PC-3 (cell line): ENCODE measurements at regions of chr2 and their contacts with region 1.

Region 1: GRCh38 chr2:199940373-199940772 is 14.9 kb downstream of the TYW5 start:
- DNase-seq: peak; percentile 43
- ATAC-seq: peak; percentile 50
- H3K4me3 ChIP-seq: no peak overlapping the region
- H3K27ac ChIP-seq: no peak overlapping the region
- H3K4me1 ChIP-seq: no peaks in the 10 kb centered on the region
- H3K27me3 ChIP-seq: no peaks in the 10 kb centered on the region
- CTCF ChIP-seq: peak; percentile 62

Region 2: GRCh38 chr2:199704358-199705238 is 235.8 kb before region 1 on chr2:
- CTCF ChIA-PET with region 1: no interaction called
- POLR2A ChIA-PET with region 1: no interaction called
- intact Hi-C with region 1: loop called (anchors 1 kb)
- DNase-seq: peak; percentile 74
- ATAC-seq: peak; percentile 82
- H3K4me3 ChIP-seq: no peak overlapping the region
- H3K27ac ChIP-seq: no peak overlapping the region
- H3K4me1 ChIP-seq: no peaks in the 10 kb centered on the region
- H3K27me3 ChIP-seq: no peaks in the 10 kb centered on the region; the same call in 1 of the 2 replicates
- CTCF ChIP-seq: peak; percentile 90

Region 3: GRCh38 chr2:199744724-199745123 is 195.6 kb before region 1 on chr2:
- CTCF ChIA-PET with region 1: no interaction called
- POLR2A ChIA-PET with region 1: no interaction called
- intact Hi-C with region 1: no loop called
- DNase-seq: no peak
- ATAC-seq: no peak
- H3K4me3 ChIP-seq: no peak overlapping the region
- H3K27ac ChIP-seq: no peak overlapping the region
- H3K4me1 ChIP-seq: peaks cover under 1% of the 10 kb centered on the region
- H3K27me3 ChIP-seq: peaks cover 69% of the 10 kb centered on the region
- CTCF ChIP-seq: no peak

Region 4: DNA sequence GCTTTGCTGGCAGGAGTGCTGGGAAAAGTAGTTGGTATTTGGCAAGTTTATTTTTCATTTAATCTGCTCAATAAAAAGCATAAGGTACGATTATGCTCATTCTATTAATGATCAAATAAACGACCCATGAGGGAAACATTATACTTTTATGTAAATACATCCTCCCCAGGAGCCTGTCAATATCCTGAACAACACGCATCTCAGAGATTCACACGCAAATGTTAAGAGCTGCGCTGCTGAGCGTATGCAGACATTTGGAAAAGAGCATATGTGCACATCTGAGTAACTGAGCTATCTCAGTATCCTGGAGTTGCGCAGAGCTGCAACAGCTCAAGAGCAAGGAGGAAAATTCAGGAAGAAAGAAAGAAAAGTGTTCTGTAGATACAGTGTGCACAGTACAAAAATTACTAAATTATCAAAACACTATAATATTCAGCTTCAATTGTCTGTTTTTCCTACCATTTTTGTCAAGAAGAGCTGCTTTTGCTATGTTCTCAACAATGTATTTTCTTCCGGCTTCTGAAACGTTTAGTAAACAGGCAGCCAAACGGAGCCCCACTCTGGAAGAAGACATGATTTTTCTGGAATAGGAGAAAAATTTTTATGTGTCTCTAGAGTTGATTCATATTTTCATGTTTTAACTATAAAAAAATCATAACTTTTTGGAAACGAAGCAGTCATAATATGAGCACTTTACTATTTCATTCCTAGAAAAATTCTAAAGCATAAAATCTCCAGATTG is 91.8 kb before region 1 on chr2:
- CTCF ChIA-PET with region 1: no interaction called
- POLR2A ChIA-PET with region 1: no interaction called
- intact Hi-C with region 1: loop called (anchors 5 kb)
- DNase-seq: no peak
- ATAC-seq: no peak
- H3K4me3 ChIP-seq: no peak overlapping the region
- H3K27ac ChIP-seq: no peak overlapping the region
- H3K4me1 ChIP-seq: peaks cover 10% of the 10 kb centered on the region; the same call in 1 of the 2 replicates
- H3K27me3 ChIP-seq: peaks cover 58% of the 10 kb centered on the region
- CTCF ChIP-seq: no peak

Region 5: GRCh38 chr2:199955339-199956261 is 15.2 kb after region 1 on chr2 and contains the starts of genes MAIP1 and TYW5:
- CTCF ChIA-PET with region 1: no interaction called
- POLR2A ChIA-PET with region 1: interaction called, 12 read pairs
- intact Hi-C with region 1: no loop called
- DNase-seq: peak; percentile 82
- ATAC-seq: peak; percentile 87
- H3K4me3 ChIP-seq: peak within 1 kb of the TSS; percentile 94
- H3K27ac ChIP-seq: peak within 1 kb of the TSS; percentile 82
- H3K4me1 ChIP-seq: peaks cover 20% of the 10 kb centered on the region
- H3K27me3 ChIP-seq: no peaks in the 10 kb centered on the region
- CTCF ChIP-seq: 0 out of 2 replicates have a peak, but pooled peaks have one; percentile 18
- total RNA-seq, gene MAIP1: 44.7 and 49.2 TPM in 2 replicates
- total RNA-seq, gene TYW5: 5.4 and 9.0 TPM in 2 replicates

Region 6: GRCh38 chr2:200054681-200055468 is 114.5 kb after region 1 on chr2:
- CTCF ChIA-PET with region 1: no interaction called
- POLR2A ChIA-PET with region 1: no interaction called
- intact Hi-C with region 1: no loop called
- DNase-seq: no peak
- ATAC-seq: no peak; the same call in 1 of the 2 replicates
- H3K4me3 ChIP-seq: no peak overlapping the region
- H3K27ac ChIP-seq: no peak overlapping the region
- H3K4me1 ChIP-seq: no peaks in the 10 kb centered on the region
- H3K27me3 ChIP-seq: no peaks in the 10 kb centered on the region
- CTCF ChIP-seq: peak; percentile 25; the same call in 1 of the 2 replicates

Region 7: GRCh38 chr2:200609027-200609614 is 668.7 kb after region 1 on chr2:
- CTCF ChIA-PET with region 1: no interaction called
- POLR2A ChIA-PET with region 1: interaction called, 13 read pairs
- intact Hi-C with region 1: no loop called
- DNase-seq: peak; percentile 91
- ATAC-seq: peak; percentile 90
- H3K4me3 ChIP-seq: peak overlapping the region; percentile 55
- H3K27ac ChIP-seq: peak overlapping the region; percentile 69
- H3K4me1 ChIP-seq: peaks cover 32% of the 10 kb centered on the region
- H3K27me3 ChIP-seq: no peaks in the 10 kb centered on the region
- CTCF ChIP-seq: no peak